ENCODE measurements at regions of chr10 and their contacts with region 1.

Region 1: GRCh38 chr10:92434385-92434784 is 139.5 kb downstream of the IDE start:
- DNase-seq: no peak
- H3K4me3 ChIP-seq: no peak overlapping the region
- H3K27ac ChIP-seq: no peak overlapping the region
- H3K4me1 ChIP-seq: no peaks in the 10 kb centered on the region
- H3K27me3 ChIP-seq: no peaks in the 10 kb centered on the region
- CTCF ChIP-seq: no peak
- POLR2A ChIP-seq: no peak

Region 2: GRCh38 chr10:92087750-92088395 is 346.5 kb before region 1 on chr10:
- intact Hi-C with region 1: loop called (anchors 2 kb)
- DNase-seq: no peak
- H3K4me3 ChIP-seq: no peak overlapping the region
- H3K27ac ChIP-seq: no peak overlapping the region
- H3K4me1 ChIP-seq: peaks cover 0 to 15% (median 8%) of the 10 kb centered on the region in 6 donors
- H3K27me3 ChIP-seq: no peaks in the 10 kb centered on the region
- CTCF ChIP-seq: peak; percentile 49 to 94 (median 74)
- POLR2A ChIP-seq: no peak

Region 3: GRCh38 chr10:92419740-92420545 is 14.4 kb before region 1 on chr10:
- intact Hi-C with region 1: no loop called
- DNase-seq: peak; percentile 77
- H3K4me3 ChIP-seq: peak overlapping the region in 7 of 8 donors; percentile 3 to 63 (median 34)
- H3K27ac ChIP-seq: no peak overlapping the region
- H3K4me1 ChIP-seq: peaks cover 0 to 13% (median 9%) of the 10 kb centered on the region in 6 donors
- H3K27me3 ChIP-seq: peaks cover 0 to 43% (median 20%) of the 10 kb centered on the region in 7 donors
- CTCF ChIP-seq: peak in 3 of 11 experiments; percentile 17 to 27 (median 27)
- POLR2A ChIP-seq: no peak